Mammary epithelial cell (primary cell): ENCODE measurements at regions of chrX and their contacts with region 1.

Region 1: DNA sequence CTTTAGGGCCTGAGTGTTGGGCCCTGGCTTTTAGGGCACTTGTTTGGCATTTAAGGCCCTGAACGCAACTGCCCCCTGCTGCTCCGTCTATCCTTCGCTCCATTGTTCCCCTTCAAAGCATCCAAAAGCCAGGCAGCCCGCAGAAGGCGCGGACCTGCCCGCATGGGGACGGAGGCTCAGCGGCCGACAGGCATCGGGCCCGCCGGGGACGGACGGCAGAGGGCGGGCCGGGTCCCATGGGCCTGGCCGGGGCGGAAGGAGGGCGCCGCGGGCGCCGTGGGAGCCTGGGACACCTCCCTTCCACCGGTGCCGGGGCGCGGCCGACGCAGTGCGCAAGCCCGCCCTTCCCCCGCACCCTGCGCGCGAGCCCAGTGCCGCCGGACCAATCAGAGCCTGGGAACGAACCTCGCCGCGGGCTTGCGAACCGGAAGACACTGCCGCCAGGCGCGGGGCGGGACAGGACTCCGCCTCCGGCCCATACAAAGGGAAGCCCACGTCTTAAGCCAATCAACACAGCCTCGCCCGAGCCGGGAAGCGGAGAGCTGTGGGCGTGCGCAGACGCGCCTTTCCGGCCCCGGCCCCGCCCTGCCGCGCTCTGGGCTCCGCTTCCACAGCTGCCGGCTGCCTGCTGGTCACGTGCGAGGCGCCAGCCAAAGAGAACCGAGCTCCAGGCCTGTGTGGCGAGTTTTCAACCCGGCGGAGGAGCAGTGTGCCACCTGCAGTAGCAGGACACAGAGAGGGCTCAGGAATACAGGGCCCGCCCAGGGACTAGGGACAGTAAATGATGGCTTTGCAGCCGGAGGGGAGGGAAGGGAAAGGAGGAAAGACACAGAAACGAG is 2.1 kb upstream of the ARHGAP4 start:
- DNase-seq: peak; percentile 99
- H3K4me3 ChIP-seq: peak overlapping the region; percentile 44 to 60 (median 51)
- H3K27ac ChIP-seq: peak overlapping the region; percentile 61
- H3K4me1 ChIP-seq: peaks cover 7% of the 10 kb centered on the region
- H3K27me3 ChIP-seq: no peaks in the 10 kb centered on the region
- CTCF ChIP-seq: peak in 1 of 2 donors; percentile 31

Region 2: GRCh38 chrX:153714256-153714655 is 213.9 kb before region 1 on chrX:
- CTCF ChIA-PET with region 1: no interaction called
- dilution Hi-C with region 1: no loop called
- in situ Hi-C with region 1: no loop called
- intact Hi-C with region 1: no loop called
- DNase-seq: no peak
- H3K4me3 ChIP-seq: no peak overlapping the region
- H3K27ac ChIP-seq: no peak overlapping the region
- H3K4me1 ChIP-seq: peaks cover 12% of the 10 kb centered on the region
- H3K27me3 ChIP-seq: no peaks in the 10 kb centered on the region
- CTCF ChIP-seq: no peak

Region 3: GRCh38 chrX:153782313-153782712 is 145.8 kb before region 1 on chrX:
- CTCF ChIA-PET with region 1: no interaction called
- dilution Hi-C with region 1: no loop called
- in situ Hi-C with region 1: no loop called
- intact Hi-C with region 1: no loop called
- DNase-seq: no peak
- H3K4me3 ChIP-seq: no peak overlapping the region
- H3K27ac ChIP-seq: no peak overlapping the region
- H3K4me1 ChIP-seq: peaks cover 14% of the 10 kb centered on the region
- H3K27me3 ChIP-seq: no peaks in the 10 kb centered on the region
- CTCF ChIP-seq: peak in 1 of 2 donors; percentile 6

Region 4: GRCh38 chrX:153819384-153820040 is 108.6 kb before region 1 on chrX:
- CTCF ChIA-PET with region 1: no interaction called
- dilution Hi-C with region 1: loop called (anchors 5 kb)
- in situ Hi-C with region 1: no loop called
- intact Hi-C with region 1: no loop called
- DNase-seq: no peak
- H3K4me3 ChIP-seq: peak overlapping the region in 2 of 3 experiments; percentile 16 to 21
- H3K27ac ChIP-seq: no peak overlapping the region
- H3K4me1 ChIP-seq: peaks cover 3% of the 10 kb centered on the region
- H3K27me3 ChIP-seq: no peaks in the 10 kb centered on the region
- CTCF ChIP-seq: no peak

Region 5: DNA sequence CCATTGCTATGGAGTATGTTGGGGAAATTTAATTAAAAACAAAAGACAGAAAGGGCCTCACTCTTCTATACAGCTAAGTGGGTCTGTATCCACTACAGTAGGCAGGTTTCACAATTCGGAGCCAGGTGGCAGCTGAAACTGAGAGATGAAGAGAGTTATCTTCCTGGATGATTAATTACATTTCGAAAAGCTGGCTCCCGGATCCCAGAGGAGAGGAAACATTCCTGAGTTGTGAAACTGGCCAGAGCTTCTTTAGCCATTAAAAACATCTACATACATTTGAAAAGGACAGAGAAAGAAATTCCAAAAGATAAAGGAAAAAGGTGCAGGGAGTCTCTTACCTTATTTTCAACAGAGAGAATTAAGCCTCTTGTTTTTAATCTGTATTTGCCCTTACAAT is 82.3 kb before region 1 on chrX:
- CTCF ChIA-PET with region 1: no interaction called
- dilution Hi-C with region 1: loop called (anchors 5 kb)
- in situ Hi-C with region 1: no loop called
- intact Hi-C with region 1: no loop called
- DNase-seq: peak; percentile 14
- H3K4me3 ChIP-seq: no peak overlapping the region
- H3K27ac ChIP-seq: no peak overlapping the region
- H3K4me1 ChIP-seq: no peaks in the 10 kb centered on the region
- H3K27me3 ChIP-seq: no peaks in the 10 kb centered on the region
- CTCF ChIP-seq: no peak

Region 6: GRCh38 chrX:153885968-153886903 is 41.9 kb before region 1 on chrX and contains the start of gene L1CAM:
- CTCF ChIA-PET with region 1: no interaction called
- dilution Hi-C with region 1: loop called (anchors 5 kb)
- in situ Hi-C with region 1: no loop called
- intact Hi-C with region 1: no loop called
- DNase-seq: no peak
- H3K4me3 ChIP-seq: peak within 1 kb of the TSS; percentile 12 to 59 (median 42)
- H3K27ac ChIP-seq: no peak within 1 kb of the TSS
- H3K4me1 ChIP-seq: peaks cover 31% of the 10 kb centered on the region
- H3K27me3 ChIP-seq: no peaks in the 10 kb centered on the region
- CTCF ChIP-seq: no peak
- total RNA-seq, gene L1CAM: 46.2 to 96.4 TPM

Region 7: DNA sequence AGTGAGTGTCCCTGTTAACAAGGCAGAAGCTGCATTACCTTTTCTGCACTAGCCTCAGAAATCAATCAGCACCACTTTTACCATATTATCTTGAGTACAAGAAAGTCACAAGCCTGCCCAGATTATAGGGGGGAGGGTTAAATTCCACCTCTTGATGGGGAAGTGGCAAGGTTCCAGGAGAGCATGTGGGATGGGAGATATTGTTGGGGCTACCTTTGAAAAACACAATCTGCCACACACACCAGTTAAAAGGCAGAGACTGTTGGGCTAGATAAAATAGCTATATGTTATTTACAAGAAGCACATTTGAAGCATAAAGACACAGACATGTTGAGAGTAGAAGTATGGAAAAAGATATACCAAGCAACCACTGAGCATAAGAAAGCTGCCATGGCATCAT is 30.2 kb before region 1 on chrX:
- CTCF ChIA-PET with region 1: no interaction called
- dilution Hi-C with region 1: no loop called
- in situ Hi-C with region 1: no loop called
- intact Hi-C with region 1: no loop called
- DNase-seq: no peak
- H3K4me3 ChIP-seq: no peak overlapping the region
- H3K27ac ChIP-seq: no peak overlapping the region
- H3K4me1 ChIP-seq: peaks cover 18% of the 10 kb centered on the region
- H3K27me3 ChIP-seq: no peaks in the 10 kb centered on the region
- CTCF ChIP-seq: no peak

Region 8: DNA sequence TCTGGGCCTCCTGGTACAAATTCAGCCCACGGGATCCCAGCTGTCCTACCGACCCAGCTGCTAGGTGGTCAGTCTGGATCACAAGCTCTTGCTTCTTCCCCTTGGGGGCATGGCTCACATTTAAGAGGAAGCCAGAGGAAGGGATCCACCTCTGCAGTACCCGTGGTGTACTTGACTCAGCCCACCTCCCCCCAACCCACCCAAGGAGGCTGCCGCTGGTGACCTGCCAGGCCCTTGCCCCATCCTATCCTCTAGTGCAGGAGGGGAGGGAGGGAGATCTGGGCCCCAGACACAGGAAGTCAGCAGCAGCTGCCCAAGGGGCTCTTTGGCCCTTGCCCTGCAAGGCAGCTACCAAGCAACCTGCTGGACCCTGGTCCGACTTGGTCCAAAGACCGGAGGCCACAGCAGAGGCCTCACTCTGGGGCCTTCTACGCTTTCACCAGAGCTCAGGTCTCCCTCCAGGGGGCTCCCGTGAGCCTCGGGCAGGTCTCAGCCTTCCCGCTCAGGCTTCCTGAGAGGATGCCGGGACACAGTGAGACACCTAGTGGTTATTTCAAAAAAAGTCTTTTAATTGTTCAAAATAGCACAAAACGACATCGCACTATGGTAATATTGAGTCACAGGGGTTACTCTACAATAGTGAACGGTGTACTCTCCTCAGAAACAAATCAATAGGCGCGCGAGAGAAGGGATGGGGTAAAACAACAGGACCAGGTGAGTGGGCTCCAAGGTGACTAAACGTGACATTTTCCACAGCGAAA is 19.0 kb after region 1 on chrX:
- CTCF ChIA-PET with region 1: no interaction called
- dilution Hi-C with region 1: no loop called
- in situ Hi-C with region 1: no loop called
- intact Hi-C with region 1: loop called (anchors 1 kb)
- DNase-seq: peak; percentile 61
- H3K4me3 ChIP-seq: no peak overlapping the region
- H3K27ac ChIP-seq: no peak overlapping the region
- H3K4me1 ChIP-seq: no peaks in the 10 kb centered on the region
- H3K27me3 ChIP-seq: no peaks in the 10 kb centered on the region
- CTCF ChIP-seq: peak; percentile 71 to 85

Region 9: DNA sequence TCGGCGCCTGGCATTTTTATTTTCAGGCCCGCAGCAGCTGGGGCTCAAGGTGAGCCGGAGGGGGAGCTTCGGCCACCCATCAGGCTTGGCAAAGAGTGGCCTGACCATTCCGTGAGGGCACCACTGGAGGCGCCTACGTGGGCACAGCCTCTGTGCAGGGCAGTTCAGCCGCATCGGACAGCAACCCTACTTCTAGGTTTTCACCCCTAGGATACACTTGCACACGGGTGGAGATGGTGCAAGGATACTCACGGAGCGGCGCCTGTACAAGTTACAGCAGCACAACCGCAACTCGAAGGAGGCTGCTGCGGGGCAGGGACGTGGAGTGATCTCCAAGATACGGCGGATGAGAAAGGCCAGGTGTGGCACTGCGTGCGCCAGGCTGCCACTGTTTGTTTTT is 32.6 kb after region 1 on chrX:
- CTCF ChIA-PET with region 1: no interaction called
- dilution Hi-C with region 1: no loop called
- in situ Hi-C with region 1: no loop called
- intact Hi-C with region 1: no loop called
- DNase-seq: no peak
- H3K4me3 ChIP-seq: no peak overlapping the region
- H3K27ac ChIP-seq: no peak overlapping the region
- H3K4me1 ChIP-seq: no peaks in the 10 kb centered on the region
- H3K27me3 ChIP-seq: no peaks in the 10 kb centered on the region
- CTCF ChIP-seq: no peak

Region 10: DNA sequence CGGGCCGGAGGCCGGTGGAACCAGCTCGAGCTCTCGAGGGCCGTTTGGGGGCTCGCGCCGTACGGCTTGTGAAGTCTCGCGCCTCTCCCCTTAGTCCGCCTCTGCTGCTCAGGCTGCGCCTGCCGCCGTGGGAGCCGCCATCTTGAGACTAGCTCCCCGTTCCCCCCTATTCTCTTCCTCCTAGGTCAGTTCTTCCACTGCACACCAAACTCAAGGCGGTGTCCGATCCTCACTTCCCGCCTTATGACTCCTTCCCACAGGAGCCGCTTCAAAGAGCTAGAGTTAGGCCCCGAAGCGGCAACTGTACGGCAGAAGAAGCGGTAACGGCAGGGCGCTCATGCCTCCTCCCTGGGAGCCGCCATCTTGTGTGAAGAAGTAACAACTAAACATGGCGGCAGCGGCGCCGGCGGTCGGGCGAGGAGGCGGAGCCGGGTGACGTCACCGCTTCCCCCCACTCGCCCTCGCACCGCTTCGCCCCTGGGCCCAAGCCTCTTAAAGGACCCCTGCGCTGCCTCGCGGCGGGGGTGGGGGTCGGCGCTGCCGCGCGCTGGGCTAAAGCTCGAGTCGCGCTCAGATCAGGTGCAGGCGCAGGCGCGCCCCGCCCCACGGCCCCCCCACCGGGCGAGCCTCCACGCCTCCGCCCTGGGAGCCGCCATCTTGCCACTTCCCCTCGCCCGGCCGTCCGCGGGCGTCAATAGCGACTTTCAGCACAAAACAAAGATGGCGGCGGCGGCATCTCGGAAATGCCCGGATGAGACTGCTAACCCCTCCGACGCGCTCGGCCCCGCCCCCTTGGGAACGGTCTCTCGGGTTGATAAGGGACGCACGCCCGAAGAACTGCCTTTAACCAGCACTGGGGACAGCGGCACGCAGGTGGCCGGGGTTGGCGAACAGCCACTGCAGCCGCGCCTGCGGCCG is 43.6 kb after region 1 on chrX and contains the start of gene HCFC1:
- CTCF ChIA-PET with region 1: no interaction called
- dilution Hi-C with region 1: no loop called
- in situ Hi-C with region 1: no loop called
- intact Hi-C with region 1: loop called (anchors 2 kb)
- DNase-seq: peak; percentile 93
- H3K4me3 ChIP-seq: peak within 1 kb of the TSS; percentile 57 to 85 (median 72)
- H3K27ac ChIP-seq: peak within 1 kb of the TSS; percentile 97
- H3K4me1 ChIP-seq: peaks cover 19% of the 10 kb centered on the region
- H3K27me3 ChIP-seq: no peaks in the 10 kb centered on the region
- CTCF ChIP-seq: no peak
- total RNA-seq, gene HCFC1: 21.8 to 47.6 TPM

Region 11: GRCh38 chrX:154019633-154020528 is 91.7 kb after region 1 on chrX and contains the start of gene IRAK1:
- CTCF ChIA-PET with region 1: no interaction called
- dilution Hi-C with region 1: loop called (anchors 5 kb)
- in situ Hi-C with region 1: no loop called
- intact Hi-C with region 1: no loop called
- DNase-seq: peak; percentile 45
- H3K4me3 ChIP-seq: peak within 1 kb of the TSS; percentile 40 to 73 (median 66)
- H3K27ac ChIP-seq: peak within 1 kb of the TSS; percentile 53
- H3K4me1 ChIP-seq: peaks cover 17% of the 10 kb centered on the region
- H3K27me3 ChIP-seq: no peaks in the 10 kb centered on the region
- CTCF ChIP-seq: no peak
- total RNA-seq, gene IRAK1: 69.0 to 129 TPM